Vagina (tissue), 2 donors: ENCODE measurements at regions of chr7 and their contacts with region 1.

Region 1: GRCh38 chr7:116173051-116174028 is 37.0 kb upstream of the TES start:
- DNase-seq: no peak
- H3K4me3 ChIP-seq: no peak overlapping the region
- H3K27ac ChIP-seq: no peak overlapping the region
- H3K4me1 ChIP-seq: no peaks in the 10 kb centered on the region
- H3K27me3 ChIP-seq: no peaks in the 10 kb centered on the region
- CTCF ChIP-seq: peak; percentile 45 to 57 (median 53)
- POLR2A ChIP-seq: no peak

Region 2: GRCh38 chr7:115965796-115966475 is 207.4 kb before region 1 on chr7:
- intact Hi-C with region 1: no loop called
- DNase-seq: no peak
- H3K4me3 ChIP-seq: no peak overlapping the region
- H3K27ac ChIP-seq: no peak overlapping the region
- H3K4me1 ChIP-seq: no peaks in the 10 kb centered on the region
- H3K27me3 ChIP-seq: no peaks in the 10 kb centered on the region
- CTCF ChIP-seq: no peak
- POLR2A ChIP-seq: no peak

Region 3: DNA sequence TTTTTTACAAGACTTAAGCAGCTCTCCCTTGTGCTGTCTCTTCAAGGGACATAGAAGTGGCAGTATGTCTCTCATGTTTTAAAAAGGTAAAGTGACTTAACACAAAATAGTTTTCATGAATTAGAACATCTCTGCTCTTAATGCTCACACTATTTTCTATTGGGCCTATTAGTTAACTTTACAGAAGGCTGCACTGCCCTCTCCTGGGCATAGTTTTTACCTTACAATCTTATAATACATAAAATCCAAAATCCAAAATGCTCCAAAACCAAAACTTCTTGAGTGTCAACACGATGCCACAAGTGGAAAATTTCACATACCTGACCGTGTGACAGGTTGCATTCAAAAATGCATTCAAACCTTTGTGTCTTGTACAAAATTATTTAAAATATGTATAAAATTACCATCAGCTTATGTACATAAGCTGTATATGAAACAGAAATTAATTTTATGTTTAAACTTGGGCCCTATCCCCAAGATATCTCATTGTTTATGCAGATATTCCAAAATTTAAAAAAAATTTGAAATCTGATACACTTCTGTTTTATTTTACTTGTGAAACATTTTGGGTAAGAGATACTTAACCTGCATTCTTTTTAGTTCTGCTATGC is 62.8 kb after region 1 on chr7:
- intact Hi-C with region 1: loop called (anchors 5 kb)
- DNase-seq: no peak
- H3K4me3 ChIP-seq: no peak overlapping the region
- H3K27ac ChIP-seq: no peak overlapping the region
- H3K4me1 ChIP-seq: peaks cover 23% of the 10 kb centered on the region
- H3K27me3 ChIP-seq: no peaks in the 10 kb centered on the region
- CTCF ChIP-seq: peak; percentile 35 to 65 (median 48)
- POLR2A ChIP-seq: no peak

Region 4: DNA sequence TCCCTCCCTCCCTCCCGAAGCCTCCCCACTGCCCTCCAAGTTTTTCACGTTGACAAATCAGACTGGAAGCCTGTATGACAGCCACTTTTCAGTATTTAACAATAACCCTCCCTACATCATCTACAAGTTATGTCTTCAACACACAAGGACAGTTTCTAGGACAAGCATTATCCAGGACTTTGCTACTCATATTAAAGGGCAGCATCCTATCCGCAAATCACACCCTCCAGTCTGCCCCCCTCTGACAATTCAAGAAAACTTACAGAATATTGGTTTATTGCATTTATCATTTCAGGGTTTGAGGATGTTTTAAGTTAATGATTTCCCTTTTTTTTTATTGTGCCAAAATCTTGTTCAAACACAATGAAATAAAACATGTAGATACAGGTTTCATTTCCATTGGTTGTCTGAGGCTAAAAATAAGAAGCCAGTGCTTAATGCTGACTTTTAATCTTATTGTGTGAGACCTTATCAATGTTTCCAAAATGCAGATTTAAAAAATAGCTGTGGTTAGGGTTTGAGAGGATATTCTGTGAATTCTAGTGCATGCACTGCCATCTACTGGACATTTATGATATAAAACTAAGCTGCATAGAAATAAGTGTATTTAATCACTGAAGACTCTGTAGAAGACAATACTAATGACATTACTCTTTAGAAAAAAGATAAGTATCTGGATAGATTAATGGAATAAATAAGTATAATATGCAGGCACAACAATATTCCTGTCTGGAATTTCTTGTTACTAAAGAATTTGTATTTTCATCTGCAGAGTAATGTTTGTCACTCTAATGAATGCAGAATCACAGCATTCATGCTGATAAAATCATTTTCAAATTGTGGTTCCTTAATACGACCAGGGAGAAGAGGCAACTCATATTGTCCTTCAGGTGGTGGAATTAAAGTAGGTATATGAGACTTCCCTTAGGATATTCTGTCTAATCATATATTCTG is 415.6 kb after region 1 on chr7:
- intact Hi-C with region 1: loop called (anchors 5 kb)
- DNase-seq: no peak
- H3K4me3 ChIP-seq: no peak overlapping the region
- H3K27ac ChIP-seq: peak overlapping the region; percentile 8
- H3K4me1 ChIP-seq: peaks cover 29% of the 10 kb centered on the region
- H3K27me3 ChIP-seq: no peaks in the 10 kb centered on the region
- CTCF ChIP-seq: peak; percentile 43 to 79 (median 66)
- POLR2A ChIP-seq: no peak